GM18951 (cell line): ENCODE measurements at regions of chr1 and their contacts with region 1.

Region 1: DNA sequence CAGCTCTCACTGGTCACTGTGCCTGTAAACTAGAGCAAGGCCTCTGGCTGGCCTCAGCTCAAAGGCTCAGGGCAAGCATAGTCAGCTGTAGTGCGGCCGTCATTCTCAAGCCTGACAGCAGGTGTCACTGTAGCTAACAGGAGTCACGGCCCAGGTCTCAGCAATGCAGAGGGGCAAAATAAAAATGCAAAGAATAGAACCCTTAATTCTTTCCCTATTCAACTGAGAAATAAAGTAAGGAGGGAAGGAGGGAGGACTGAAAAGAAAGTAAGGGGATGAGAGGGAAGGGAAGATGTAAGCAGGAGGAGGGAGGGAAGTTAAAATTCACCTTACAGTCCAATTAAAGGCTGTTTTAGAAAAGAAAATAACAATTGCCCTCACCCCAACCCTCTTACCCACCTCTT is 106.1 kb downstream of the KIAA0319L start:
- POLR2A ChIP-seq: no peak

Region 2: DNA sequence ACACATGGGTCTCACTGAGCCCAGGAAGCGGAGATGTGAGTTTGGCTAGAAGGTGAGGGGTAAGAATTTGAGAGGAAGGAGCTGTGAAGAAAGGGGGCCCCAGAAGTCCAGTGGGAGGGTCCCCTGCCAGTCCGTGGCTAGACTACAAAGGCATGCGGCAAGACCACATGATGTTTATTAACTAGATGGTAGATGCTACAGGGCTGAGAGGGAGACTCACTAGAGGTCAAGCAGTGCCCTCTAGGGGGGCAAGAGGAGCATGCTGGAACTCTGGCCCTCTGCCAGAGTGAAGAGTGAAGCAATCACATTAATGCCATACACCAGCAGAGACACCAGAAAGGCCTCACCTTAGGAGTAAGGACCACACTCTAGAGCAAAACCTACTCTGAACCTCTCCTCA is 93.9 kb after region 1 on chr1:
- in situ Hi-C with region 1: loop called (anchors 5 kb)
- POLR2A ChIP-seq: no peak

Region 3: DNA sequence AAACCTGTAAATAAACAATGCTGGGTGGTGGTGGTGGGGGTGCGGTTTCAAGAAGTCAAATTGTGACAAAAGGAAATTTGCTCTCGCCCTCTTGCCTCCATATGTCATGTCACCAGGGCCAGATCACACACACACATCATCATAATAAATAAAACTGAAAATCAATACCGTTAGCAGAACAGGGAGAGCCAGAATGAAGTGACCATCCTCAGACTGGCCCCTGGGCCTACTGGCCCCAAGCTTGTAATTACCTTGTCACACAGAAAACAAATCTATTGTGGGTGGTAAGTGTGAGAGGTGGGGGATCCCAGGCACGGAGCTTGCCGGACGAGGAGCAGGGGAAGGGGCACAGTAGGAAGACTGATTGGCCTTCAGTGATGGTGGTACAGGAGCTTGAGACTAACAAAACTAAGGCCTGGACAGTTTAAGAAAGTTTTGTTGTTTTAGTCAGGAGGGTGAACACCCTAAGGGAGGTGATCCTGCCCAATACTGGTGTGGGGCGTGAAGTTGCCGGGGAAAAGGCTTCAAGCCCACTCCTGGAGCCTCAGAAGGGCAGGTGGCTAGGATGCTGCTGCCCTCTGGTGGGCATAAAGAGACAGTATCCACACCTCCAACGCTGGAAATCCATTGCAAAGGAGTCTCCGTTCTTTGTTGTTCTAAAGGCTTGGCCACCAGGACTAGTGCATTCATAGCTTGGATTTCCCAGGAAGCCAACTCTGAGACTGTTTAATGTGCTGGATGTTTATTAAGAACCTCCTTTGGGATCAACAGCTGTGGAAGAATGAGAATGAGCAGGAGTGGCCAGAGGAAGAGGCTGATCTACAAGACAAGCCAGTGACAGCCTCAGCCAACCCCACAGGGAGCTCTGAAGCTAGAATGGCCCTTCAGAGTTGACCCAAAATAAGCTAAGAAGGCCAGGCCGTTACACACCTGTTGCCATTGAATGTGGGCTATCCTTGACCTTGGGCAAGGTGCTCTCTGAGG is 275.6 kb after region 1 on chr1:
- in situ Hi-C with region 1: loop called (anchors 25 kb)
- POLR2A ChIP-seq: peak; percentile 16